Thyroid gland (tissue), 4 donors: ENCODE measurements at regions of chr12 and their contacts with region 1.

Region 1: GRCh38 chr12:25384038-25384892 is 133.5 kb upstream of the KRAS start:
- DNase-seq: no peak
- H3K4me3 ChIP-seq: no peak overlapping the region
- H3K27ac ChIP-seq: peak overlapping the region in 1 of 3 donors; percentile 100
- H3K4me1 ChIP-seq: peaks cover 0 to 4% of the 10 kb centered on the region in 2 donors
- H3K27me3 ChIP-seq: no peaks in the 10 kb centered on the region
- CTCF ChIP-seq: no peak
- POLR2A ChIP-seq: no peak

Region 2: GRCh38 chr12:25250744-25251730 is 133.2 kb before region 1 on chr12 and contains the start of gene KRAS:
- intact Hi-C with region 1: loop called (anchors 5 kb)
- DNase-seq: peak; percentile 96 to 98
- H3K4me3 ChIP-seq: peak within 1 kb of the TSS; percentile 2 to 100 (median 83)
- H3K27ac ChIP-seq: peak within 1 kb of the TSS; percentile 85 to 98 (median 87)
- H3K4me1 ChIP-seq: peaks cover 3 to 4% of the 10 kb centered on the region in 2 donors
- H3K27me3 ChIP-seq: no peaks in the 10 kb centered on the region
- CTCF ChIP-seq: no peak
- POLR2A ChIP-seq: peak; percentile 87
- total RNA-seq, gene KRAS: 17.3 to 25.7 (median 22.3) TPM

Region 3: DNA sequence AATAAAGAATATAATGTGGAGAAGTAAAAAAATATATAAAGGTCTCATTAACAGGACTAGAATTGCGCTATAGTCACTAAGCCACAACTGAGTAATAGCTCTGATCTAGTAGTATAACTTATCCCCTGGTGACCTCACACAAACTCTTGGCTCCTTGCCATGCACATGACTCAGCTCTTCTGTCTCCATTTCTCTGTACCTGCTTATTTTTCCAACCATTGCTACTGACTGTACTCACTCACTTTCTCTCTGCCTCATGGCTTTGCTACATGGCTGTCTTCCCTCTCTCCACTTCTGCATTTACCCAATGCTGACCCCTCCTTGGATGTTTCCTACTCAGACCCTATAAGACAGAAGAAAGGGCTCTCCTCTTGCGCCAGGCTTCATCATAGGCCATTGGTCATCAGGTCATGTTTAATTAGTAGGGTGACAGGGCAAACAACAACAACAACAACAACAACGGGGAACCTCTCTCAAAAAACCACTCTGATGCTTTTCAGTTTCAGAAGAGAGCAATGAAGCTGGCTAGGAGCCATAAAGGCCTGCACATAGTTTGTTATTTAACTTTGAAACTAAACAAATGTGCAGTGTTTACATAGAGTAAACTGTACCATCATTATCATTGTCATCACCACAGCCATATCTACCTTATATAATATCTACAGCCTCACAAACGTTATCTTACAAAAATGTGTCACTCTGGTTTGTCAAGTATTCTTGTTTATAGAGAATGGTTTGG is 107.9 kb before region 1 on chr12:
- intact Hi-C with region 1: no loop called
- DNase-seq: peak; percentile 67 to 70
- H3K4me3 ChIP-seq: no peak overlapping the region
- H3K27ac ChIP-seq: peak overlapping the region in 1 of 3 donors; percentile 44
- H3K4me1 ChIP-seq: peaks cover 4 to 10% of the 10 kb centered on the region in 2 donors
- H3K27me3 ChIP-seq: no peaks in the 10 kb centered on the region
- CTCF ChIP-seq: no peak
- POLR2A ChIP-seq: no peak